Activated CD8-positive, alpha-beta T cell treated with anti-CD3 and anti-CD28 coated beads, Interleukin-2, amount 10 ng/mL, durations not matched to agents 7 days and 5 days (primary cell): ENCODE measurements at regions of chrX and their contacts with region 1.

Region 1: DNA sequence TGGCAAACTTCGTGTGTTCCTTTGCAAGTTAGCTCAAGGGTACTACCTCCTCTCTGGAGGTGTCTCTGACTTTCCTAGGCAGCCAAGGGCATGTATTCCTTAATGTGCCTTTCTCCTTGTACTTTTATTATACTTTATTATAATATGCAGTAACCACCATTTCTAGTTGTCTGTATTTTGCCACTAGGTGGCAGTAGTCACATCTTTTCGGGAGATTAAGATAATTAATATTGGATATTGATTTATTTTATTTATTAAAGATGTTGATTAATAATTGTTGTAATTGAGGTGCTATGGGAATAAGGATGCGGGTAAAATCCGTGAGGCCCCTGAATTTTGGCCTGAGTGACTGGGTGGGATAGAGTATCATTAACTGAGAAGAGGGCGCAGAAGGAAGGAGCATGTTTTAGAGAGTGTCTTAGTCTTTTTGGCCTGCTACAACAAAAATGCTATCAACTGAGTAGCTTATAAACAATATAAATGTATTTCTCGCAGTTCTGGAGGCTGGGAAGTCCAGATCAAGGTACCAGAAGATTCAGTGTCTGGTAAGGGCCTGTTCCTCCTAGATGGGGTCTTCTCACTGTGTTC is 153.3 kb downstream of the TMEM164 start:
- DNase-seq: no peak
- ATAC-seq: no peak
- H3K4me3 Mint-ChIP-seq: no peak overlapping the region
- H3K27ac Mint-ChIP-seq: no peak overlapping the region
- H3K4me1 Mint-ChIP-seq: peaks cover 16% of the 10 kb centered on the region
- H3K27me3 Mint-ChIP-seq: no peaks in the 10 kb centered on the region

Region 2: DNA sequence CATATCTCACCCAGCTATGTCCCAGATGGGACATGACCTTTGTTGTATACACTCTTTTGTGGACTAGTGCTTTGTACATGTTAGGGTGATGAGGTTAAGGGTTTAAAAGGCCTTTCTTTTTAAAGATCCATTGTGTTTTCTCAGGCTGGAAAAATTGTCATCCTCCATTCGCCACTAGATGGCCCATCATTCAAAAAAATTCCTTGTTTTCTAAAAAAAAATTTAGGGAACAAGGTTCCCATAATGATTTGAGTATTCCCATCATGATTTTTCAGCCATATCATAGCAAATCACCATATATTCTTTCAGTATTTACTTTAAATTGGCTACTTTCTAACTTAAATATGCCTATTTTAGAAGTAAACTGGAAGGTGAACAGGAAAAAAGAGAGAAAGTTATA is 245.2 kb before region 1 on chrX:
- CTCF ChIA-PET with region 1: no interaction called
- POLR2A ChIA-PET with region 1: no interaction called
- DNase-seq: no peak
- ATAC-seq: no peak
- H3K4me3 Mint-ChIP-seq: no peak overlapping the region
- H3K27ac Mint-ChIP-seq: no peak overlapping the region
- H3K4me1 Mint-ChIP-seq: no peaks in the 10 kb centered on the region
- H3K27me3 Mint-ChIP-seq: no peaks in the 10 kb centered on the region

Region 3: GRCh38 chrX:110412971-110413721 is 256.9 kb after region 1 on chrX:
- CTCF ChIA-PET with region 1: interaction called, 162 read pairs
- POLR2A ChIA-PET with region 1: no interaction called
- DNase-seq: peak; percentile 71
- ATAC-seq: peak; percentile 96
- H3K4me3 Mint-ChIP-seq: no peak overlapping the region
- H3K27ac Mint-ChIP-seq: no peak overlapping the region
- H3K4me1 Mint-ChIP-seq: no peaks in the 10 kb centered on the region
- H3K27me3 Mint-ChIP-seq: peaks cover 5% of the 10 kb centered on the region